Activated naive CD4-positive, alpha-beta T cell treated with anti-CD3 and anti-CD28 coated beads for 36 hours (primary cell): ENCODE measurements at regions of chr7 and their contacts with region 1.

Region 1: GRCh38 chr7:107879400-107880035 is 11.5 kb upstream of the DLD start:
- DNase-seq: peak; percentile 57
- H3K4me3 Mint-ChIP-seq: no peak overlapping the region
- H3K27ac Mint-ChIP-seq: no peak overlapping the region
- H3K4me1 Mint-ChIP-seq: peaks cover 13% of the 10 kb centered on the region
- H3K27me3 Mint-ChIP-seq: peaks cover 4% of the 10 kb centered on the region

Region 2: DNA sequence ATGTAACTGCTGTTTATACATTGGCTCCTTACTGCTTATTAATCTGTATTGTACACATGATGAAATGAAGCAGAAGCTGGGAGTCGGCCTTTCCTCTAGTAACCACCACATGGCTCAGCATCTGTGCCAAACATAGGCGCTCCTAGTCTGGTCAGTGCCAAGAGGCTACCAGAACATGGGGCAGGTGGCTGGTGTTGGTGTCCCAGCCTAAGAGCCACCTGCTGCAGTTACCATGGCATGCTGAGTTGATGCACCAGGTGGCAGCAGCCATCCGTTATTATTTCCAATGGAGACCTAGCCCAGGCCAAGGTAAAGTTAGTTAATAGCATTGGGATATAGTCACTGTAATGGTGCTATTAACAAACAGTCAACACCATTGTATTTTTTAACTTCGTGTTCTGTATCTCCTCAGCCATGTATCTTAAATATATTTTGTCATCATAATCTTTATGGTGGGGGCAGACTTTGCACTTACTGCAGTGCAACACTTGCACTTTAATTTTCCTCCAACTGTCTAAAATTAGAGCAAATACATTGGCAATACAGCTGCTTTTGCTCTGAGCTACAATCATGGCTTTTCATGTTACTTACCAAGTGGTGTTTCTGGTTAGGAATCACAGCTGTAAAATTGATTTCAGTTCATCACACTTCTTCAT is 677.6 kb before region 1 on chr7:
- CTCF ChIA-PET with region 1: interaction called, 3 read pairs
- intact Hi-C with region 1: loop called (anchors 2 kb)
- DNase-seq: peak; percentile 62
- H3K4me3 Mint-ChIP-seq: no peak overlapping the region
- H3K27ac Mint-ChIP-seq: peak overlapping the region; percentile 56
- H3K4me1 Mint-ChIP-seq: no peaks in the 10 kb centered on the region
- H3K27me3 Mint-ChIP-seq: no peaks in the 10 kb centered on the region

Region 3: DNA sequence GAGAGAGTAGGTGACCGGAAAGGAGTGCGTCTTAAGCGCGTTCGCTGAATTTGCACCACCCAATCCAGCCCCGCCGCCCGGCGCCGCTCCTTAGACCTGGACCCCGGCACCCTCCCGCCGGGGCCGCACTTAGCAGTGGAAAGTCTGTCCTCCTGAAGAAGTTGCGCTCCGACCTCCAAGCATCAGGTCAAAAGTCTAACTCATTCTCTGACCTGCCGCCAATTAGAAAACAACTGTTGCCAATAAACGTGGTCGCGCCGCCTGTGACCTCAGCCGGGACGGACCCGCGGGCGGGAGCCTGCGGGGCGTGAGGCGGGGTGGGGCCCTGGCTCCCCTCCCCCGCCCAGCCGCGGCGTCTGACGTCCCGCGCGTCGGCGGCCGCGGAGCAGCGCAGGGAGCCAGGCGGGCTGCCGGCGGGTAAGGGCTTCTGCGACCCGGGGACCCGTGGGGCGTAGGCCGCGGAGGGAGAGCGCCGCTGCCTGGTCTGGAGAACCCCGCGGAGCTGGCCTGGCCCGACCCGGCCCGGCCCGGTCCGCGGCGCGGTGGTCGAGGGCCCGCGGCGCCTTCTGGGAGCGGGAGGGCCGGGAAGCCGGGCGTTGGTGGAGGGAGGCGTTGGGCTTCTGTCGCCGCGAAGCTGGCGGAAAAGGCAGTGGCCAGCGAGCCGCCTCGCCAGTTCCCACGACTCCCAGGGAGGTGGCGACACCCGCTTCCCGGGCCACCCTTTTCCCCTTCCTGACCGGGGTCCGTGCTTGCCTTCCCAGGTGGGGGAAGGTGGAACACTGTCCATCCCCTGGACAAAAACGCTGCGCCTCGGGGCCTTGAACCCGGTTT is 299.4 kb before region 1 on chr7 and contains the start of gene BCAP29:
- CTCF ChIA-PET with region 1: no interaction called
- intact Hi-C with region 1: loop called (anchors 5 kb)
- DNase-seq: peak; percentile 64
- H3K4me3 Mint-ChIP-seq: peak within 1 kb of the TSS; percentile 85
- H3K27ac Mint-ChIP-seq: peak within 1 kb of the TSS; percentile 71
- H3K4me1 Mint-ChIP-seq: peaks cover 21% of the 10 kb centered on the region
- H3K27me3 Mint-ChIP-seq: no peaks in the 10 kb centered on the region
- total RNA-seq, gene BCAP29: 18.9 to 21.0 TPM

Region 4: GRCh38 chr7:107743567-107744344 is 135.8 kb before region 1 on chr7 and contains the start of gene CBLL1:
- CTCF ChIA-PET with region 1: interaction called, 170 read pairs
- intact Hi-C with region 1: loop called (anchors 1 kb)
- DNase-seq: peak; percentile 98
- H3K4me3 Mint-ChIP-seq: peak within 1 kb of the TSS; percentile 96
- H3K27ac Mint-ChIP-seq: peak within 1 kb of the TSS; percentile 100
- H3K4me1 Mint-ChIP-seq: peaks cover 42% of the 10 kb centered on the region
- H3K27me3 Mint-ChIP-seq: no peaks in the 10 kb centered on the region
- total RNA-seq, gene CBLL1: 31.6 to 32.1 TPM

Region 5: DNA sequence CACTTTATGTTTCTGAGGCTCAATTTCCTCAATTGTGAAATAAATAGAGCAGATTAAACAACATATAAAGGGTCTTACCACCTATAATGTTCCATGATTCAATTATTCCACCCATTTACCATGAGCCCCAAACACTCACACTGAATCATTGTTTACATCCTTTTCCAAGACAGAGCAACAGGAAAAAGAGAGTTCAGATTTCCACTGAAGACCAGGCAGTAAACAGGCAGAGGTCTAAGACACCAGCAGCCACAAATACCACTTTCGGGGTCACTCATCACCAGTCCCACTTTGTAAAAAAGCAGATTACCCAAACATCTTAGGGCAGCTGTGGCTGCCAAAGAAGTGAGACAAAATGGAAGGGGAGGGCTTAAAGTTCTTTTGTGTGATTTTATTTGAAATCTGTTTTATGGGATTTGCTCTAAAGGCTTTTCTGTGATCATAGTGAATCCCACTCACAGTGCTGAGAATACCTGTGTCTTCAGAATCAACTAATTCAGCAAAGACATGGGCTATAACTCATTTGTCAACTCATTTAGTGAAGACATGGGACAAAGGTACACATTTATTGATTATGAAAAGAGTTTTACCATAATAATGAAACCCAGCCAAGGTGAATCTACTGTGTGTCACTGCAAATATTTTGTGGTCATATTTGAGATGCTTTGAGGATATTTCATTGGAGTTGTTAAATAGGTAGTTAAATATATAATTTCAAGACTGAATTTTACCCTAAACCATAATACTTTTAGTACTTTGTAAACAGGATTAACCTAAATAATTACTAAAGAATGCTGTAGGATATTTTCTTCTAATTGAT is 13.4 kb before region 1 on chr7:
- CTCF ChIA-PET with region 1: interaction called, 10 read pairs
- intact Hi-C with region 1: no loop called
- DNase-seq: no peak
- H3K4me3 Mint-ChIP-seq: no peak overlapping the region
- H3K27ac Mint-ChIP-seq: peak overlapping the region; percentile 39
- H3K4me1 Mint-ChIP-seq: peaks cover 7% of the 10 kb centered on the region
- H3K27me3 Mint-ChIP-seq: no peaks in the 10 kb centered on the region